ENCODE measurements at regions of chr18 and their contacts with region 1.

Region 1: GRCh38 chr18:76803814-76804213 is 18.5 kb upstream of the ZNF236 start:
- DNase-seq: peak; percentile 69
- H3K4me3 ChIP-seq: no peak overlapping the region
- H3K27ac ChIP-seq: no peak overlapping the region
- H3K4me1 ChIP-seq: peaks cover 37% of the 10 kb centered on the region
- H3K27me3 ChIP-seq: no peaks in the 10 kb centered on the region
- CTCF ChIP-seq: peak; percentile 78 to 88

Region 2: GRCh38 chr18:76822510-76823160 is 18.8 kb after region 1 on chr18 and contains the start of gene ZNF236:
- CTCF ChIA-PET with region 1: no interaction called
- dilution Hi-C with region 1: no loop called
- in situ Hi-C with region 1: no loop called
- intact Hi-C with region 1: loop called (anchors 1 kb)
- DNase-seq: peak; percentile 67
- H3K4me3 ChIP-seq: peak within 1 kb of the TSS; percentile 84 to 95 (median 94)
- H3K27ac ChIP-seq: peak within 1 kb of the TSS; percentile 81
- H3K4me1 ChIP-seq: peaks cover 12% of the 10 kb centered on the region
- H3K27me3 ChIP-seq: no peaks in the 10 kb centered on the region
- CTCF ChIP-seq: no peak
- total RNA-seq, gene ZNF236: 10.2 to 13.0 TPM

Region 3: DNA sequence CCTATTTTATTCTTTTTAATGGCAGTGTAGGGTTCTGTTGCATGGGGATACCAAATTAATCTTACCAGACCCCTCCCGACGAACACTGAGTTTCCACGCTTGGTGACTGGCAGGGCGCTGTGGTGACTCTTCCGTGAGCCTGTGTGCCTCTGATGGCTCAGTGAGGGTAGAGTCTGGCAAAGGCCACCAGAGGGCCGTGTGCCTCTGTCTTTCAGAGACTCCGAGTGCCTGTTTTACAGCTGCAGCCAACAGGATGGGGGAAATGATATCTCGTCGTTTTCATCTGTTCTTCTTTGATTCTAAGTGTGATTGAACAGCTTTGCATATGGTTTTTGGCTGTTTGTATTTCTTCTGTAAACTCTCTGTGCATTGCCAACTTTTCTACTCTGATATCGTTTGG is 118.3 kb after region 1 on chr18:
- CTCF ChIA-PET with region 1: no interaction called
- dilution Hi-C with region 1: no loop called
- in situ Hi-C with region 1: no loop called
- intact Hi-C with region 1: loop called (anchors 1 kb)
- DNase-seq: peak; percentile 1
- H3K4me3 ChIP-seq: no peak overlapping the region
- H3K27ac ChIP-seq: no peak overlapping the region
- H3K4me1 ChIP-seq: no peaks in the 10 kb centered on the region
- H3K27me3 ChIP-seq: no peaks in the 10 kb centered on the region
- CTCF ChIP-seq: peak; percentile 33 to 56

Region 4: GRCh38 chr18:76988031-76988826 is 184.4 kb after region 1 on chr18:
- CTCF ChIA-PET with region 1: no interaction called
- dilution Hi-C with region 1: no loop called
- in situ Hi-C with region 1: loop called (anchors 5 to 10 kb)
- intact Hi-C with region 1: loop called (anchors 1 kb)
- DNase-seq: no peak
- H3K4me3 ChIP-seq: no peak overlapping the region
- H3K27ac ChIP-seq: no peak overlapping the region
- H3K4me1 ChIP-seq: no peaks in the 10 kb centered on the region
- H3K27me3 ChIP-seq: no peaks in the 10 kb centered on the region
- CTCF ChIP-seq: no peak

Region 5: GRCh38 chr18:77132371-77133050 is 328.7 kb after region 1 on chr18 and contains the start of gene MBP:
- CTCF ChIA-PET with region 1: no interaction called
- dilution Hi-C with region 1: no loop called
- in situ Hi-C with region 1: no loop called
- intact Hi-C with region 1: loop called (anchors 10 kb)
- DNase-seq: peak; percentile 71
- H3K4me3 ChIP-seq: peak within 1 kb of the TSS; percentile 74 to 88 (median 76)
- H3K27ac ChIP-seq: peak within 1 kb of the TSS; percentile 95
- H3K4me1 ChIP-seq: peaks cover 36% of the 10 kb centered on the region
- H3K27me3 ChIP-seq: no peaks in the 10 kb centered on the region
- CTCF ChIP-seq: no peak
- total RNA-seq, gene MBP: 30.7 to 43.3 TPM

Region 6: DNA sequence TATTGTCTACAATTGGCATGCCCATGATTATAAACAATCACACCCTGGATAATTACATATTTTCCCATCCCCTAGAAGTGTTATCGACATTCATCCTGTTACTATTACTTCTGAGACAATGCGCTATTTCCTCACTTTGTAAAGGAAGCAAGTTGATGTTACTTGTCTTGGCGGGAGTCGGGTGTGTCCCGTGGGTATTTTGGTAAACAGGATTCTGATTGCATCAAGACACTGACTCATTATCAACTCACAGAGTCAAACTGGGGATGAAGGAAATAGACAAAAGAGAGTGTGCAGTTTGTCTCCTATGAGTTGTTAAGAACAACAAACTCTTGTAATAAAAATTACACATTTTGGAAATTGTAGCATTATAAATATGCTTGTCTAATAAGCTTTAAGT is 588.5 kb after region 1 on chr18:
- CTCF ChIA-PET with region 1: no interaction called
- dilution Hi-C with region 1: no loop called
- in situ Hi-C with region 1: no loop called
- intact Hi-C with region 1: no loop called
- DNase-seq: no peak
- H3K4me3 ChIP-seq: no peak overlapping the region
- H3K27ac ChIP-seq: no peak overlapping the region
- H3K4me1 ChIP-seq: no peaks in the 10 kb centered on the region
- H3K27me3 ChIP-seq: no peaks in the 10 kb centered on the region
- CTCF ChIP-seq: no peak